Panc1 (cell line): ENCODE measurements at regions of chr7 and their contacts with region 1.

Region 1: DNA sequence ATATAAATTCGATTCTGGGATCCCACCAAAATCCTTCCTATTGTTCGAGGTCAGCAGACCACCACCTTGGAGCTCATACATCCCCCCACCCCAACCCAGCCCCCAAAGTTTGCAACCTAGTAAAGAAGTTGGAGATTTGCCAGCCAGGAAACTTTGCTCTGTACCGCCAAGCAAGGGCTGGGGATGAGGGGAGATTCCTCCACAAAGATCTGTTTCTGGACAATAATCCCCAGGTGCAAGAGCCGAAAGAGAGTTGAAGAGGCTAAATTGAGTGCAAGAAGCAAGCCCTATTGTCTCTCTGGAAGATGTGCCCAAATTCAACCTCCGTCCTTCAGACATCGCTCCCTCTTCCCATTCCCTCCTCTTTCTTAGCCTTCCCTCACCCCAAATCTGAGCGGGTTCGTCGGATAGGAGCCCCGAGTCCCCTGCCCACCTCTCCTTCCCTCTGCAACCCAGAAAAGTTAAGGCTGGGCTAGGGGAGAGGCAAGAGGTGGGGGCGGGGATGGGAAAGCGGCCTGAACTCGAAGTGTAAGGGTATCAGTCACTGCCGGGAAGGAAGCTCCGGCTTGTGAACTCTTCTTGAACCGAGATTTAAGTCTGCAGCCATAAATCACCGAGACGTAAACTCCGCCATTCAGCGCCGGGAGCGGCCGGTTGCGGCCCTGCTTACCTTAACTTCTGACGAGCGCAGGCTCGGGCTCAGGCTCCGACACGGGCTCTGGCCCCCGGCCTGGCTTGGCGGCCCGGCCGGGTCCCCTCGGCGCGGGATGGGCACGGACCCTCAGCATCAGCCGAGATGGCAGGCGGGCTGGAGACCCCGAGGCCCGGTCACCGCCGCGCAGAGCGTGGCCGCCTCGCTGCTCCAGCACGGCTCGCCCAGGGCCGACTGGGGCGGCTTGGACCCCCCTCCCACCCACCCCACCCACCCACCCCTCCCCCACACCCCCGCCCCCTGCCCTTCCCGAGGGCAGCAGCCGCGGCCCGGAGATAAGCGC is 10.8 kb upstream of the HOXA2 start:
- DNase-seq: no peak
- ATAC-seq: peak; percentile 12
- H3K4me3 ChIP-seq: peak overlapping the region; percentile 77 to 92
- H3K27ac ChIP-seq: peak overlapping the region; percentile 100
- H3K4me1 ChIP-seq: peaks cover 58% of the 10 kb centered on the region
- H3K27me3 ChIP-seq: no peaks in the 10 kb centered on the region
- CTCF ChIP-seq: no peak

Region 2: DNA sequence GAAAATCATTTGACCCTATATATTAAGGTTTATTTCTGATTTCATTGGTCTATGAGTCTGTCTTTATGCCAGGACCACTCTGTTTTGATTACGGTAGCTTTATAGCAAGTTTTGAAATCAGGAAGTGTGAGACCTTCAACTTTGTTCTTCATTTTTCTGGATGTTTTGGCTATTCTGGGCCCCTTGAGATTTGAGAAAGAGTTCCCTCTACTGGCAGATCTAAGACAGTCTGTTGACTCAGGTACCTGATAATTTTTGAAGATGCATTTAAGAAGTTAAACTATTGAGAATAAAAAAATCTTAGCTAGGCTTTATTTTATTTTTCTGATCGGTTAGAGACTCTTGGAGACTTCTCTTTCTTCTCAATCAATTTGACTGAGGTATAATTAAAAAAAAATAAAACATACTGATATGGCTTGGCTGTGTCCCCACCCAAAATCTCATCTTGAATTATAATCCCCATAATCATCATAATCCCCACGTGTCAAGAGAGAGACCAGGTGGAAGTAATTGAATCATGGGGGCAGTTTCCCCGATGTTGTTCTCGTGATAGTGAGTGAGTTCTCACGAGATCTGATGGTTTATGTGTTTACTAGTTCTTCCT is 612.4 kb before region 1 on chr7:
- CTCF ChIA-PET with region 1: no interaction called
- POLR2A ChIA-PET with region 1: no interaction called
- in situ Hi-C with region 1: no loop called
- intact Hi-C with region 1: no loop called
- DNase-seq: no peak
- ATAC-seq: no peak
- H3K4me3 ChIP-seq: no peak overlapping the region
- H3K27ac ChIP-seq: no peak overlapping the region
- H3K4me1 ChIP-seq: no peaks in the 10 kb centered on the region
- H3K27me3 ChIP-seq: peaks cover 5% of the 10 kb centered on the region; the same call in 1 of the 2 replicates
- CTCF ChIP-seq: peak; percentile 71; the same call in 1 of the 2 replicates

Region 3: GRCh38 chr7:26864309-26865093 is 248.8 kb before region 1 on chr7 and contains the start of gene SKAP2:
- CTCF ChIA-PET with region 1: interaction called, 10 read pairs
- POLR2A ChIA-PET with region 1: no interaction called
- in situ Hi-C with region 1: no loop called
- intact Hi-C with region 1: no loop called
- DNase-seq: peak; percentile 98
- ATAC-seq: peak; percentile 98
- H3K4me3 ChIP-seq: peak within 1 kb of the TSS; percentile 84 to 96
- H3K27ac ChIP-seq: peak within 1 kb of the TSS; percentile 95
- H3K4me1 ChIP-seq: peaks cover 34% of the 10 kb centered on the region
- H3K27me3 ChIP-seq: no peaks in the 10 kb centered on the region
- CTCF ChIP-seq: no peak
- total RNA-seq, gene SKAP2: 66.8 TPM

Region 4: DNA sequence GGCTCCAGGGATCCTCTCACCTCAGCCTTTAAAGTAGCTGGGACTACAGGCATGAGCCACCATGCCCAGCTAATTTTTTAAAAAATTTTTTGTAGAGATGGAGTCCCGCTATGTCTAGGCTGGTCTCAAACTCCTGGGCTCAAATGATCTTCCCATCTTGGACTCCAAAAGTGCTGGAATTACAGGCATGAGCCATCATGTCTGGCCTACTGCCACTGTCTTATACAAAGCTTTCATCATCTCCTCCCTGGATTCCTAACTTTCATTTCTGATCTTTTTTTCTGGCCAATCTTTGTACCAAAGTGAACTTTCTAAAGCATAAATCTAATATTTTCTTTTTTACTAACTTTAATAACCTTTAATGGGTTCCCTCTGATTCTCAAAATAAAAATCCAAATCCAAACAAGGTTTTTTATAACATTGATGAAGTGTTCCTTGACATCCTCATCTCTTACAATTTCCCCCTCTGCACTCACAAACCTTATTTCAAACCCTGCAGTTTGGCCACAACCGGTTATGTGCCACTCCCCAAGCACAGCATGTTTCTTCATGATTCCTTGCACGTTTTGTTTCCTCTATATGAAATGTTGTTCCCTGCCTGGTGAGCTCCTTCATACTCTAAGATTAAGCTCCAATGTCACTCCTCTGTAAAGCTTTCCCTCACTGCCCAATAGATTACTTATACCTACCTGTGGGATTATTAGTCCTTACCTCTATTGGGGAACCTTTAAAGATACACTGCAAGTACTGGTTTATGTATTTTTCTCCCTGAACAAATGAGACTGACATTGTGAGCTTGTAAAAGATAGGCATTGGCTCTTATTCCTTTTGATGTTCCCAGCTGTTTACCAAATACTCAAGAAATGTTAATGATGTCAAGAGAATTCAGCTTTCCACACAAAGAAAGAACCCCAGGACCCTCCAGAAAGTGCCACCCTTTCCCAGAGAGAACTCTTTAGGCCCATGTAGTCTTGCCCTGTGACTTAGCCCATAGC is 119.1 kb before region 1 on chr7:
- CTCF ChIA-PET with region 1: no interaction called
- POLR2A ChIA-PET with region 1: no interaction called
- in situ Hi-C with region 1: no loop called
- intact Hi-C with region 1: no loop called
- DNase-seq: no peak
- ATAC-seq: no peak
- H3K4me3 ChIP-seq: no peak overlapping the region
- H3K27ac ChIP-seq: no peak overlapping the region
- H3K4me1 ChIP-seq: no peaks in the 10 kb centered on the region
- H3K27me3 ChIP-seq: no peaks in the 10 kb centered on the region
- CTCF ChIP-seq: no peak

Region 5: DNA sequence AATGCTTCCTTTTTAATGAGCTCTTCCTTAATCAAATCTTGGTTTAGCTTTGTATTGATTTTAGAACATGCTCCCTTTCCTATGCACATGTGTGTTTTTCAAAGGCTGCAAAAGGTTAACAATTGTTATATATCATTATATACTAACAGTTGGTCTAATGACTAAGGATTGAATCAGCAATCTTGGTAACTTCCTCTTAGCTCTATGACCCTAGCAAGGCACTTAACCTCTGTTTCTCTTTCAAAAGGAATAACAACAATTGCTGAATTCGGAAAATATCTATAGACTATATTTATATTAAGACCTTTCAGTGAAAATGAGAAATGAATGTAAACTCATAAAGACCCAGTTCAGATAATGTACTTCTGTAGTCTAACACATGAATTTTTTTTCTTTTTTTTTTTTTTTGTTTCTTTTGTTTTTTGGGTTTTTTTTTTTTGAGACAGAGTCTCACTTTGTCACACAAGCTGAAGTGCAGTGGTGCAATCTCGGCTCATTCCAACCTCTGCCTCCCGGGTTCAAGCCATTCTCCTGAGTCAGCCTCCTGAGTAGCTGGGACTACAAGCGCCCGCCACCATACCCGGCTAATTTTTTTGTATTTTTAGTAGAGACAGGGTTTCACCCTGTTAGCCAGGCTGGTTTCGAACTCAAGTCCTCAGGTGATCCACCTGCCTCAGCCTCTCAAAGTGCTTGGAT is 66.2 kb before region 1 on chr7:
- CTCF ChIA-PET with region 1: no interaction called
- POLR2A ChIA-PET with region 1: no interaction called
- in situ Hi-C with region 1: no loop called
- intact Hi-C with region 1: no loop called
- DNase-seq: peak; percentile 36
- ATAC-seq: peak; percentile 86
- H3K4me3 ChIP-seq: no peak overlapping the region
- H3K27ac ChIP-seq: no peak overlapping the region
- H3K4me1 ChIP-seq: no peaks in the 10 kb centered on the region
- H3K27me3 ChIP-seq: no peaks in the 10 kb centered on the region
- CTCF ChIP-seq: no peak

Region 6: DNA sequence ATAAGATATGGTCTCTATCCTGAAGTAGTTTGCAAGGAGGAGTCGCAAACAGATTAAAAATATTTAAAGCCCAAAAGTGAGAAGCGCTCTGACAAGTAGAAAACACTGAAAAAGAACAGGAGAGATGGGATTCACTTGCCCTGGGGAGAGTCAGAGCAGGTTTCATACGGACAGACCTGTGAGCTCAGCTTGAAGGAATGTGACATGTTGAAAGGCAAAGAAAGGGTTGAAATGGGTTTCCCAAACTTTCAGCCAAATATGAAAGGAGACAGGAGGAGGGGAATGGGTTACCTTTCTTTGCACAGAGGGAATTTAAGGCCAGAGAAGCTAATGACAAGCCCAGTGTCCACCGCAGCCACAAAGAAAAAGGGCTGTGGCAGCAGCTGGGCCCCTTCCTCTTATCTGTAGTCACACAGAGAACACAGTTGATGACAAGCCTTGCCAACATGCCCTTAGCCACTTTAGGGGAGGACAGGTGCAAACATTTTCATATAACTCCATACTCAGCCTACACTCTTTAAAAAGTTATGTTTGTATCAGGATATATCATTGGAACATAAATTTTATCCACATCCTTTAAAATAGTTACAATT is 32.3 kb before region 1 on chr7:
- CTCF ChIA-PET with region 1: no interaction called
- POLR2A ChIA-PET with region 1: no interaction called
- in situ Hi-C with region 1: no loop called
- intact Hi-C with region 1: no loop called
- DNase-seq: no peak
- ATAC-seq: peak; percentile 65; the same call in 1 of the 2 replicates
- H3K4me3 ChIP-seq: no peak overlapping the region
- H3K27ac ChIP-seq: peak overlapping the region; percentile 8; the same call in 1 of the 2 replicates
- H3K4me1 ChIP-seq: peaks cover 5% of the 10 kb centered on the region; the same call in 1 of the 2 replicates
- H3K27me3 ChIP-seq: no peaks in the 10 kb centered on the region
- CTCF ChIP-seq: no peak